ENCODE measurements at regions of chr11 and their contacts with region 1.

Region 1: GRCh38 chr11:35305670-35306382 is 113.5 kb downstream of the SLC1A2 start:
- DNase-seq: peak in 7 of 9 donors; percentile 20 to 57 (median 53)
- ATAC-seq: peak; percentile 55
- H3K4me3 ChIP-seq: no peak overlapping the region
- H3K4me3 Mint-ChIP-seq: peak overlapping the region; percentile 6 to 84 (median 77)
- H3K27ac ChIP-seq: peak overlapping the region; percentile 16
- H3K27ac Mint-ChIP-seq: peak overlapping the region; percentile 19 to 96 (median 86)
- H3K4me1 ChIP-seq: peaks cover 0 to 14% of the 10 kb centered on the region in 2 donors
- H3K4me1 Mint-ChIP-seq: peaks cover 16 to 42% (median 31%) of the 10 kb centered on the region in 7 donors
- H3K27me3 ChIP-seq: no peaks in the 10 kb centered on the region
- H3K27me3 Mint-ChIP-seq: peaks cover 0 to 14% (median 0%) of the 10 kb centered on the region in 5 donors

Region 2: GRCh38 chr11:34926101-34926830 is 379.6 kb before region 1 on chr11:
- CTCF ChIA-PET with region 1: interaction called, 16 read pairs
- POLR2A ChIA-PET with region 1: interaction called, 4 read pairs
- intact Hi-C with region 1: loop called (anchors 1 to 2 kb)
- DNase-seq: peak in 7 of 9 donors; percentile 18 to 61 (median 58)
- ATAC-seq: peak; percentile 80
- H3K4me3 ChIP-seq: no peak overlapping the region
- H3K4me3 Mint-ChIP-seq: no peak overlapping the region
- H3K27ac ChIP-seq: no peak overlapping the region
- H3K27ac Mint-ChIP-seq: peak overlapping the region in 1 of 9 donors; percentile 49
- H3K4me1 ChIP-seq: peaks cover 0 to 10% of the 10 kb centered on the region in 2 donors
- H3K4me1 Mint-ChIP-seq: peaks cover 10 to 54% (median 29%) of the 10 kb centered on the region in 7 donors
- H3K27me3 ChIP-seq: no peaks in the 10 kb centered on the region
- H3K27me3 Mint-ChIP-seq: no peaks in the 10 kb centered on the region

Region 3: DNA sequence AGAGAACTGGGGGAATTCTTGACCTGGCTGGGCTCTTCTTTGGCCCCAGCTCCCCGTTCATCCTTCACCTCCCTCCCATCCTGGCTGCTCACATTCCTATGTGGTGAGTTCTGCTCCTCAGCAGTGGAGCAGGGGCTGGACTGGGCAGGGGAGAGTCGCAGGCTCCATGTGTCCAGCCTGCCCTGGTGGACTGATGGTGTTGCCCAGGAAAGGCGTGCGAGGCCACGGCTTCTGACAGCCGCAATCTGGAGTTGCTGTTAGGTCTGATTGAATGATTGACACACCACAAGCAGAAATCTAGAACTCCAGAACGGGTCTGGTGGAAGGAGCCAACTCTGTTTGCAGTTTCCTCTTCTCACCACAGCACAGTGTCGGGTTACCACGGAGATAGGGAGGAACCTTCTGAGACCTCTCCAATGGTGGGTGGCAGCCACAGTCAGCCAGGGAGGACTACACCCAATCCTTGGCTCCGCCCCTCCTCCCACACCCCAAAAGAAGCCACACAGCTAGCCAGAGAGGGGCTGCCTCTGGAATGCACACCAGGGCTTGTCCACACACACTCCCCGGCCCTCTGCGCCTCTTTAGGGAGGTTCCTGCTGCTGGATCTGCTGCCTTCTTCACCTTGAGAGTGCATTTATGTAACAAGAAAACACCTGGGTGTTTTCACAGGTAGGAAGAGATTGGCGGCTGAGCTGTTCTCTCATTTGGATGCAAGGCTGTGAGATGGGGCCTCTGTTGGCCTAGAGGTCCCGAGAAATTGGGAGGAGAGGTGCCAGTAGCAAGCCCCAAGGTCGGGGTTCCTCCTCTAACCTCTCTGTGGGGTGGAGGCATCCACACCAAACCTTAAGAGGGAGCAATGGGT is 223.3 kb before region 1 on chr11:
- CTCF ChIA-PET with region 1: no interaction called
- POLR2A ChIA-PET with region 1: no interaction called
- intact Hi-C with region 1: loop called in 1 of 2 experiments (anchors 1 kb)
- DNase-seq: peak; percentile 76 to 94 (median 92)
- ATAC-seq: peak; percentile 86
- H3K4me3 ChIP-seq: peak overlapping the region; percentile 55
- H3K4me3 Mint-ChIP-seq: peak overlapping the region; percentile 78 to 89 (median 86)
- H3K27ac ChIP-seq: peak overlapping the region; percentile 95
- H3K27ac Mint-ChIP-seq: peak overlapping the region; percentile 89 to 100 (median 99)
- H3K4me1 ChIP-seq: peaks cover 64 to 78% of the 10 kb centered on the region in 2 donors
- H3K4me1 Mint-ChIP-seq: peaks cover 61 to 100% (median 95%) of the 10 kb centered on the region in 7 donors
- H3K27me3 ChIP-seq: no peaks in the 10 kb centered on the region
- H3K27me3 Mint-ChIP-seq: no peaks in the 10 kb centered on the region

Region 4: GRCh38 chr11:35192347-35192746 is 113.5 kb before region 1 on chr11:
- CTCF ChIA-PET with region 1: interaction called, 5 read pairs
- POLR2A ChIA-PET with region 1: no interaction called
- intact Hi-C with region 1: loop called in 1 of 2 experiments (anchors 5 kb)
- DNase-seq: no peak
- ATAC-seq: no peak
- H3K4me3 ChIP-seq: no peak overlapping the region
- H3K4me3 Mint-ChIP-seq: peak overlapping the region in 5 of 10 donors; percentile 8 to 61 (median 24)
- H3K27ac ChIP-seq: peak overlapping the region; percentile 0
- H3K27ac Mint-ChIP-seq: peak overlapping the region in 8 of 9 donors; percentile 55 to 89 (median 75)
- H3K4me1 ChIP-seq: peaks cover 12 to 51% of the 10 kb centered on the region in 2 donors
- H3K4me1 Mint-ChIP-seq: peaks cover 37 to 100% (median 97%) of the 10 kb centered on the region in 7 donors
- H3K27me3 ChIP-seq: no peaks in the 10 kb centered on the region
- H3K27me3 Mint-ChIP-seq: no peaks in the 10 kb centered on the region

Region 5: GRCh38 chr11:35246745-35247144 is 59.1 kb before region 1 on chr11:
- CTCF ChIA-PET with region 1: interaction called, 8 read pairs
- POLR2A ChIA-PET with region 1: interaction called, 5 read pairs
- intact Hi-C with region 1: loop called in 1 of 2 experiments (anchors 2 kb)
- DNase-seq: no peak
- ATAC-seq: no peak
- H3K4me3 ChIP-seq: no peak overlapping the region
- H3K4me3 Mint-ChIP-seq: peak overlapping the region in 5 of 10 donors; percentile 14 to 81 (median 70)
- H3K27ac ChIP-seq: peak overlapping the region; percentile 75
- H3K27ac Mint-ChIP-seq: peak overlapping the region; percentile 40 to 100 (median 99)
- H3K4me1 ChIP-seq: peaks cover 58 to 63% of the 10 kb centered on the region in 2 donors
- H3K4me1 Mint-ChIP-seq: peaks cover 24 to 92% (median 69%) of the 10 kb centered on the region in 7 donors
- H3K27me3 ChIP-seq: no peaks in the 10 kb centered on the region
- H3K27me3 Mint-ChIP-seq: peaks cover 0 to 4% (median 0%) of the 10 kb centered on the region in 5 donors

Region 6: DNA sequence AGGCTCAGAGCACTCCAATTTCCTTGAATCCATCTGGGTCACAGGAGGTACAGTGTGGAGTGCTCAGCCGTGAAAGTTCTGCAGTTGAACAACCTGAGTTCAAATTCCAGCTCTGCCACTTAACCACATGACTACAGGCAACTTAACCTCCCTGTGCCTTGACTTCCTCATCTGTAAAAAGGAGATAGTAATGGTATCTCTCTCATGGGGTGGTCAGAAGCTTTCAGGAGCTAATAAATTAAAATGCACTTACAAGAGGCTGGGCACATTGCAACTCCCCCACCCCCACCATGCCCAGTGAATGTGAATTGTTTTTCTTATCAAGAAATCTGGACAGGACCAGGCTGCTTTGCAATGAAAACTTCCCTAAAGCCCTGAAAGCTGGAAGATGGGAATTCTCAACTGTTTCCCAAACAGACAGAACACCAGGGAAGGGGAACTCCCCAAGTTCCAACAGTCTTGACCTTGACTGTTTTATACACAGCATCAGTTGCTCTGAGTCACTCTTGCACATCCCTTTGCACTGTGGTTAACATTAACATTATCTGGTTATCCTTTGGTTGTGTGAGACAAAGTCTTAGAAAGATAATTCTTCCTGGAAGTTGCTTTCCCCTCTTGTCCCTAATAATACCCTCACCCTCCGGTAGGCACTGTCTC is 23.5 kb before region 1 on chr11:
- CTCF ChIA-PET with region 1: no interaction called
- POLR2A ChIA-PET with region 1: no interaction called
- intact Hi-C with region 1: no loop called
- DNase-seq: no peak
- ATAC-seq: peak; percentile 49
- H3K4me3 ChIP-seq: no peak overlapping the region
- H3K4me3 Mint-ChIP-seq: peak overlapping the region in 1 of 10 donors; percentile 10
- H3K27ac ChIP-seq: no peak overlapping the region
- H3K27ac Mint-ChIP-seq: peak overlapping the region in 3 of 9 donors; percentile 14 to 93 (median 30)
- H3K4me1 ChIP-seq: no peaks in the 10 kb centered on the region
- H3K4me1 Mint-ChIP-seq: peaks cover 0 to 10% (median 7%) of the 10 kb centered on the region in 7 donors
- H3K27me3 ChIP-seq: no peaks in the 10 kb centered on the region
- H3K27me3 Mint-ChIP-seq: no peaks in the 10 kb centered on the region

Region 7: DNA sequence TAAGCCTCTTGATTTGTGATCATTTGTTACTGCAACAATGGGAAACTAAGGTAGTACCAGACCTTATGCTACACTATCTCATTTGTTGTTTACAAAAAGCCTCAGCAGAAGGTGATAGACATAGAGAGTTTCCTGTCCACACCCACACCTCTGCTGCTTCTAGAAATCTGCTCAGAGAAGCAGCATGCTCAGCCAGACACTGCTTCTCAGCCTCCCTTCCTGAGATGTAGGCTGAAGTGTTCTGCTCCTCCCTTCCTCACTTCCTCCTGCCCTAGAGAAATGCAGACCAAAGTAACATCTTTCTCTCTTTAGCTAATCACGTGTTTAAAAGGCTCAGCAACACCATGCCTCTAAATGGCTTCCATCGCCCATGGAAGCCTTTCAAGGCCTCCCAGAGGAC is 25.1 kb after region 1 on chr11:
- CTCF ChIA-PET with region 1: interaction called, 24 read pairs
- POLR2A ChIA-PET with region 1: interaction called, 11 read pairs
- intact Hi-C with region 1: no loop called
- DNase-seq: peak in 8 of 9 donors; percentile 39 to 78 (median 68)
- ATAC-seq: peak; percentile 91
- H3K4me3 ChIP-seq: no peak overlapping the region
- H3K4me3 Mint-ChIP-seq: peak overlapping the region in 9 of 10 donors; percentile 2 to 68 (median 61)
- H3K27ac ChIP-seq: peak overlapping the region; percentile 69
- H3K27ac Mint-ChIP-seq: peak overlapping the region; percentile 88 to 98 (median 90)
- H3K4me1 ChIP-seq: peaks cover 37 to 51% of the 10 kb centered on the region in 2 donors
- H3K4me1 Mint-ChIP-seq: peaks cover 36 to 76% (median 67%) of the 10 kb centered on the region in 7 donors
- H3K27me3 ChIP-seq: no peaks in the 10 kb centered on the region
- H3K27me3 Mint-ChIP-seq: no peaks in the 10 kb centered on the region